ENCODE measurements at regions of chr21 and their contacts with region 1.

Region 1: DNA sequence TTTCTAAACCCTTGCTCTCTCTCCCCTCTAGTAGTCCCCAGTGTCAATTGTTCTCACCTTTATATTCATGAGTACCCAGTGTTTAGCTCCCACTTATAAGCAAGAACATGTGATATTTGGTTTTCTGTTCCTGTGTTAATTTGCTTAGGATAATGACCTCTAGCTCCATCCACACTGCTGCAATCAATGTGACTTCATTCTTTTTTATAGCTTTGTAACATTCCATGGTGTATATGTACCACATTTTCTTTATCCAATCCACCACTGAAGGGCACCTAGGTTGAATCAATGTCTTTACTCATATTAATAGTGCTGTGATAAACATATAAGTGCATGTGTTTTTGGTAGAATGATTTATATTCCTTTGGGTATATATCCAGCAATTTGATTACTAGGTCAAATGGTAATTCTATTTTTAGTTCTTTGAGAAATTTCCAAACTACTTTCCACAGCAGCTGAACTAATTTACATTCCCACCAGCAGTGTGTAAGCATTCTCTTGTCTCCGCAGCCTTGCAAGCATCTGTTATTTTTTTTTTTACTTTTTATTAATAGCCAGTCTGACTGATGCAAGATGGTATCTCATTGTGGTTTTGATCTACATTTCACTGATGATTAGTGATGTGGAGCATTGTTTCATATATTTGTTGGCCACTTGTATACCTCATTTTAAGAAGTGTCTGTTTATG is 277.8 kb downstream of the LTN1 start:
- DNase-seq: no peak
- H3K4me3 ChIP-seq: no peak overlapping the region
- H3K4me3 Mint-ChIP-seq: no peak overlapping the region
- H3K27ac ChIP-seq: no peak overlapping the region
- H3K27ac Mint-ChIP-seq: no peak overlapping the region
- H3K4me1 ChIP-seq: no peaks in the 10 kb centered on the region
- H3K4me1 Mint-ChIP-seq: peaks cover 0 to 3% (median 0%) of the 10 kb centered on the region in 3 donors
- H3K27me3 ChIP-seq: no peaks in the 10 kb centered on the region
- H3K27me3 Mint-ChIP-seq: no peaks in the 10 kb centered on the region

Region 2: DNA sequence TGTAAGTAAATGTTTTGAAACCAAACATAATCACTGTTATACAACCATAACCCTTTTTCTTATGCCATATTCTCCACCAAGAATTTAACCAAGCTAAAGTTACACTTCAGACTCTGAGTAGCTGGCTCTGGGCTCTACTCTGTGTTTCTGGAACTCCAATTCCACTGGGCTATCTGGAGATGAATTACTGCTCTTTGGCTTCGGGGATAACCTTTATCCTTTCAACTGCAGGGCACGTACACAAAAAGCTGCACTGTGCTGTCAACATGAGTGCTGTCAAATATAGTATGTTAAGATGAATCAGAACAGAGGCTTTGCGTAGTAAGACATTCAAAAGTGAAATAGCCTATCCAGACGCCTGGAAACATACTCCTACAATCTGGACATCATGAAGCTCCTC is 222.8 kb before region 1 on chr21:
- CTCF ChIA-PET with region 1: no interaction called
- POLR2A ChIA-PET with region 1: interaction called, 11 read pairs
- DNase-seq: no peak
- H3K4me3 ChIP-seq: no peak overlapping the region
- H3K4me3 Mint-ChIP-seq: no peak overlapping the region
- H3K27ac ChIP-seq: no peak overlapping the region
- H3K27ac Mint-ChIP-seq: no peak overlapping the region
- H3K4me1 ChIP-seq: no peaks in the 10 kb centered on the region
- H3K4me1 Mint-ChIP-seq: no peaks in the 10 kb centered on the region
- H3K27me3 ChIP-seq: no peaks in the 10 kb centered on the region
- H3K27me3 Mint-ChIP-seq: peaks cover 2 to 6% of the 10 kb centered on the region in 2 donors

Region 3: DNA sequence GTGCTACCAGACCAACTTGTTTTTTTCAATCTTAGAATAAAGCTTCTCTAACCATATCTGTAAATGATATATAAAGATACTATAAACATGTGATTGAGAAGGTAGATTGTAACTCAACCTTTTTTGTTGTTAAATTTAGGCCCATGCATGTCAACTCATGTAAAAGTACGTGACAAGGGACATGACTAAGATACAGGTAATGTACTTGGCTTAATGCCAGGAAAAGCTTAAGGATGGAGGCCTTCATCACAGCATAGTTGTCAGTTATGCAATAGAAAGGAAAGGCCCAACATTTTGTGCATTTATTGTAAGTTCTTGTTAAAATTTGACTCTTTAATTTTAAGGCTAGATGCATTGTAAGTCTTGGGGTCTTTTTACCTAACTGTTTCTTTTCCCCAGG is 27.4 kb before region 1 on chr21:
- CTCF ChIA-PET with region 1: no interaction called
- POLR2A ChIA-PET with region 1: no interaction called
- DNase-seq: no peak
- H3K4me3 ChIP-seq: no peak overlapping the region
- H3K4me3 Mint-ChIP-seq: no peak overlapping the region
- H3K27ac ChIP-seq: no peak overlapping the region
- H3K27ac Mint-ChIP-seq: no peak overlapping the region
- H3K4me1 ChIP-seq: no peaks in the 10 kb centered on the region
- H3K4me1 Mint-ChIP-seq: peaks cover 0 to 4% (median 2%) of the 10 kb centered on the region in 3 donors
- H3K27me3 ChIP-seq: no peaks in the 10 kb centered on the region
- H3K27me3 Mint-ChIP-seq: no peaks in the 10 kb centered on the region

Region 4: GRCh38 chr21:28943631-28944030 is 228.7 kb after region 1 on chr21:
- CTCF ChIA-PET with region 1: no interaction called
- POLR2A ChIA-PET with region 1: no interaction called
- DNase-seq: no peak
- H3K4me3 ChIP-seq: no peak overlapping the region
- H3K4me3 Mint-ChIP-seq: no peak overlapping the region
- H3K27ac ChIP-seq: no peak overlapping the region
- H3K27ac Mint-ChIP-seq: peak overlapping the region in 2 of 8 donors; percentile 7 to 69
- H3K4me1 ChIP-seq: no peaks in the 10 kb centered on the region
- H3K4me1 Mint-ChIP-seq: peaks cover 4% of the 10 kb centered on the region in 3 donors
- H3K27me3 ChIP-seq: no peaks in the 10 kb centered on the region
- H3K27me3 Mint-ChIP-seq: no peaks in the 10 kb centered on the region

Region 5: GRCh38 chr21:28992526-28993292 is 277.8 kb after region 1 on chr21 and contains the start of gene LTN1:
- CTCF ChIA-PET with region 1: no interaction called
- POLR2A ChIA-PET with region 1: no interaction called
- DNase-seq: peak; percentile 98 to 99 (median 99)
- H3K4me3 ChIP-seq: peak within 1 kb of the TSS; percentile 88
- H3K4me3 Mint-ChIP-seq: peak within 1 kb of the TSS; percentile 85 to 97 (median 95)
- H3K27ac ChIP-seq: peak within 1 kb of the TSS; percentile 91
- H3K27ac Mint-ChIP-seq: peak within 1 kb of the TSS; percentile 78 to 100 (median 98)
- H3K4me1 ChIP-seq: peaks cover 34% of the 10 kb centered on the region
- H3K4me1 Mint-ChIP-seq: peaks cover 33 to 52% (median 48%) of the 10 kb centered on the region in 3 donors
- H3K27me3 ChIP-seq: no peaks in the 10 kb centered on the region
- H3K27me3 Mint-ChIP-seq: no peaks in the 10 kb centered on the region
- total RNA-seq, gene LTN1: 22.1 to 23.2 TPM